Natural killer cell (primary cell): ENCODE measurements at regions of chr6 and their contacts with region 1.

Region 1: GRCh38 chr6:83859410-83860358 is at the start of gene CYB5R4:
- DNase-seq: peak; percentile 91 to 97
- ATAC-seq: peak; percentile 94 to 98 (median 96)
- H3K4me3 ChIP-seq: peak within 1 kb of the TSS; percentile 88
- H3K4me3 Mint-ChIP-seq: peak within 1 kb of the TSS; percentile 98
- H3K27ac ChIP-seq: peak within 1 kb of the TSS; percentile 84
- H3K27ac Mint-ChIP-seq: peak within 1 kb of the TSS; percentile 90 to 93
- H3K4me1 ChIP-seq: peaks cover 13% of the 10 kb centered on the region
- H3K4me1 Mint-ChIP-seq: peaks cover 32 to 46% of the 10 kb centered on the region in 2 donors
- H3K27me3 ChIP-seq: peaks cover 11% of the 10 kb centered on the region
- H3K27me3 Mint-ChIP-seq: peaks cover 16 to 25% of the 10 kb centered on the region in 2 donors
- CTCF ChIP-seq: peak; percentile 55
- total RNA-seq, gene CYB5R4: 34.0 to 40.5 (median 34.5) TPM

Region 2: GRCh38 chr6:83978324-83978734 is 118.6 kb after region 1 on chr6:
- intact Hi-C with region 1: no loop called
- DNase-seq: no peak
- ATAC-seq: no peak
- H3K4me3 ChIP-seq: no peak overlapping the region
- H3K4me3 Mint-ChIP-seq: no peak overlapping the region
- H3K27ac ChIP-seq: no peak overlapping the region
- H3K27ac Mint-ChIP-seq: no peak overlapping the region
- H3K4me1 ChIP-seq: no peaks in the 10 kb centered on the region
- H3K4me1 Mint-ChIP-seq: no peaks in the 10 kb centered on the region
- H3K27me3 ChIP-seq: no peaks in the 10 kb centered on the region
- H3K27me3 Mint-ChIP-seq: no peaks in the 10 kb centered on the region
- CTCF ChIP-seq: no peak

Region 3: DNA sequence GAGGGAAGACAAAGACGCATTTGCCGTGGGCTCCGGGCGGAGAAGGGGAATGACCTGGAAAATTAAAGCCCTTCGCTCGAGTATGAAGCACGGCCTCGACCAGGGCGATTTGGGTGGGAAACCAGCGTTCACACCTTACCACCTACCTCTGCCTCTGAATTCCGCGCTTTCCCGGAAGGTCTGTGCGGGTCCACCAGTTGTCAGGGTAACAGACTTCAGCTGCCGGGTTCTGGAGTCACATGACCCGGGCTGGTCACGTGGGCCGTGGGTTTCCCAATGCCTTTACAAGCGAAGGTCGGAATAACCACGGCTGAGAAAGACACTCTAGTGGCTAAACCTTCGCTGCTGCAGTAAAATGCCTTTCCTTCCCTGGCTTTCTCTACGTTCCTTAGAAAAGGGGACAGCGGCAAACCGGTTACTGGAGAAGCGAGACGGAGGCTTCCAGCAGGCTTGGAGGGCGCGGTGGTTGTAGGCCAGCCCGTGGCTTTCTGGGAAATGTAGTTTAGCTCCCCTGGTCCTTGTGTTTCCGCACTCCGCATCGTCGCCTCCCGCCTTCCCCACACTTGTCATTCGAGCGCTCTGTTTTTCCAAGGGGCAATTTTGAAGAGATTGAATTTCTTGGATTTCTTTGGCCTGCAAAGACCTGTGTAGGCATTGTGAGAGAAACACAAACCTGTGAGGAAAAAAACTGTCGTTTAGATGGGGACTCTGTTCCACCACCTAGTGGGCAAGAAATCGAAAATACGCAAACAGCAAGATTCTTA is 367.9 kb after region 1 on chr6 and contains the start of gene CEP162:
- intact Hi-C with region 1: loop called (anchors 5 kb)
- DNase-seq: peak; percentile 90 to 93
- ATAC-seq: peak; percentile 92 to 94 (median 93)
- H3K4me3 ChIP-seq: peak within 1 kb of the TSS; percentile 86
- H3K4me3 Mint-ChIP-seq: peak within 1 kb of the TSS; percentile 100
- H3K27ac ChIP-seq: peak within 1 kb of the TSS; percentile 45
- H3K27ac Mint-ChIP-seq: peak within 1 kb of the TSS; percentile 82 to 91
- H3K4me1 ChIP-seq: peaks cover 8% of the 10 kb centered on the region
- H3K4me1 Mint-ChIP-seq: peaks cover 21 to 22% of the 10 kb centered on the region in 2 donors
- H3K27me3 ChIP-seq: peaks cover 14% of the 10 kb centered on the region
- H3K27me3 Mint-ChIP-seq: peaks cover 2 to 10% of the 10 kb centered on the region in 2 donors
- CTCF ChIP-seq: peak; percentile 88
- total RNA-seq, gene CEP162: 11.2 to 14.6 (median 12.0) TPM